Activated CD4-positive, alpha-beta memory T cell treated with anti-CD3 and anti-CD28 coated beads, Interleukin-2, amount 10 ng/mL, durations not matched to agents 7 days and 5 days (primary cell): ENCODE measurements at regions of chr11 and their contacts with region 1.

Region 1: GRCh38 chr11:269146-269890 is 8.9 kb upstream of the NLRP6 start:
- DNase-seq: peak; percentile 67
- H3K4me3 Mint-ChIP-seq: peak overlapping the region; percentile 88
- H3K27ac Mint-ChIP-seq: peak overlapping the region; percentile 98
- H3K4me1 Mint-ChIP-seq: peaks cover 36% of the 10 kb centered on the region
- H3K27me3 Mint-ChIP-seq: peaks cover 13% of the 10 kb centered on the region

Region 2: DNA sequence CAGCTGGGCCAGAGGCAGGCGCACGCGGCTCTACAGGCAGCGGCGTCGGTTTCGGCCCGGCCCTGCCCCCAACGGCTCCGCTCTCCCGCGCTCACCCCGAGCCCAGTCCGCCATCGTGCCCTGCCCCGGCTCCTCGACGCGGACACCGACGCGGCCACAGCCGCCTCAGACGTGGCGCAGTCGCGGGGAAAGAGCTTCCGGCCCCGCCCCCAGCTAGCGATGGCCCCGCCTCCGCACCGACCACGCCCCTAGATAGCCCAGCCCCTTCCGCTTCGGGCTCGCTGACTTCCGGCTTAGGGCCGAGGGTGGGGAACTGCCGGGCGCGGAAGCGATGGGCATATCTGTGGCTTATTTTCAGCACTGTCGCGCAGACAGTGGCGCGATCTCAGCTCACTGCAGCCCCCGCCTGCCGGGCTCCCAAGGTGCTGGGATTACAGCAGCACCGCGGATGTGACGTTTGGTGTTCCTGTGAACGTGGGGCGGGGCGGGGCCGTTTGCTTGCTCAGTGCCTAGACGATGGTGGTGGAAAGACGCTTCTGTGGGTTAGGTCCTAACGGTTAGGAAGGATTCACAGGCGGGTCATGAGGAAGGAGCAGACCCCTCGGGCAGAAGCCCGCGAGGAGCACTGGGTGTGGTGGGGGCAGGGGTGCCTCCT is 62.0 kb before region 1 on chr11 and contains the starts of genes BET1L and RIC8A:
- CTCF ChIA-PET with region 1: no interaction called
- POLR2A ChIA-PET with region 1: interaction called, 30 read pairs
- DNase-seq: peak; percentile 98
- H3K4me3 Mint-ChIP-seq: peak within 1 kb of the TSS; percentile 96
- H3K27ac Mint-ChIP-seq: peak within 1 kb of the TSS; percentile 100
- H3K4me1 Mint-ChIP-seq: peaks cover 55% of the 10 kb centered on the region
- H3K27me3 Mint-ChIP-seq: no peaks in the 10 kb centered on the region
- total RNA-seq, gene BET1L: 39.3 to 44.5 TPM
- total RNA-seq, gene RIC8A: 98.7 to 103 TPM

Region 3: DNA sequence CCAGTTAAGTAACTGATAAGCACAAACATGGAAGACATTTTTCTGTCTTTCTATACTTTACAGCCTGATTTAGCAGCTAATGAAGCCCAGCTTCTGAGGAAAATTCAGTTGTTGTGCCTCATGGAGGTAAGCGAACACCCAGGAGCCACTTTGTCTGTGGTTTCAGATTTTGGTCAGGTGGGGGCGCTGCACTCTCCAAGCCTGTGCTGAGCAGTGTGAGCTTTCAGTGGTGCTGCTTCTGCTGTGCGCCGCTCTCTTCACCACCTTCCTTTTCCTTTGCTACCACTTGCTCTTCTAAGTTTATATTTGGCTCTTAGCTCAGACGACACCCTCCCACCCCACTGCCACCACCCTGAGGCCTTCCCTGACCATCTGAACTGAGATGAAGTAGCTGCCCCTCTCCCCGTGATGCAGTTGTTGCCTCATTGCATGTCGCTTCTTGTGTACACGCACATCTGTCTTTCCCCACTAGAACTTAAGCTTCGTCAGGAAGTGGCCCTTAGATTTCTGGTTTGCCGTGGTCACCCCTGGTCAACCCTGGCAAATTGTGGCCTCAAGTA is 18.5 kb before region 1 on chr11:
- CTCF ChIA-PET with region 1: interaction called, 17 read pairs
- POLR2A ChIA-PET with region 1: interaction called, 25 read pairs
- DNase-seq: peak; percentile 84
- H3K4me3 Mint-ChIP-seq: no peak overlapping the region
- H3K27ac Mint-ChIP-seq: peak overlapping the region; percentile 59
- H3K4me1 Mint-ChIP-seq: peaks cover 11% of the 10 kb centered on the region
- H3K27me3 Mint-ChIP-seq: no peaks in the 10 kb centered on the region

Region 4: GRCh38 chr11:288328-289144 is 19.2 kb after region 1 on chr11 and contains the start of gene PGGHG:
- CTCF ChIA-PET with region 1: interaction called, 3 read pairs
- POLR2A ChIA-PET with region 1: interaction called, 75 read pairs
- DNase-seq: peak; percentile 71
- H3K4me3 Mint-ChIP-seq: peak within 1 kb of the TSS; percentile 95
- H3K27ac Mint-ChIP-seq: peak within 1 kb of the TSS; percentile 80
- H3K4me1 Mint-ChIP-seq: peaks cover 35% of the 10 kb centered on the region
- H3K27me3 Mint-ChIP-seq: peaks cover 10% of the 10 kb centered on the region
- total RNA-seq, gene PGGHG: 113 to 117 TPM

Region 5: GRCh38 chr11:313787-314547 is 44.6 kb after region 1 on chr11 and contains the start of gene IFITM1:
- CTCF ChIA-PET with region 1: no interaction called
- POLR2A ChIA-PET with region 1: interaction called, 37 read pairs
- DNase-seq: peak; percentile 84
- H3K4me3 Mint-ChIP-seq: peak within 1 kb of the TSS; percentile 88
- H3K27ac Mint-ChIP-seq: peak within 1 kb of the TSS; percentile 96
- H3K4me1 Mint-ChIP-seq: peaks cover 33% of the 10 kb centered on the region
- H3K27me3 Mint-ChIP-seq: no peaks in the 10 kb centered on the region
- total RNA-seq, gene IFITM1: 1,010 to 1,055 TPM

Region 6: DNA sequence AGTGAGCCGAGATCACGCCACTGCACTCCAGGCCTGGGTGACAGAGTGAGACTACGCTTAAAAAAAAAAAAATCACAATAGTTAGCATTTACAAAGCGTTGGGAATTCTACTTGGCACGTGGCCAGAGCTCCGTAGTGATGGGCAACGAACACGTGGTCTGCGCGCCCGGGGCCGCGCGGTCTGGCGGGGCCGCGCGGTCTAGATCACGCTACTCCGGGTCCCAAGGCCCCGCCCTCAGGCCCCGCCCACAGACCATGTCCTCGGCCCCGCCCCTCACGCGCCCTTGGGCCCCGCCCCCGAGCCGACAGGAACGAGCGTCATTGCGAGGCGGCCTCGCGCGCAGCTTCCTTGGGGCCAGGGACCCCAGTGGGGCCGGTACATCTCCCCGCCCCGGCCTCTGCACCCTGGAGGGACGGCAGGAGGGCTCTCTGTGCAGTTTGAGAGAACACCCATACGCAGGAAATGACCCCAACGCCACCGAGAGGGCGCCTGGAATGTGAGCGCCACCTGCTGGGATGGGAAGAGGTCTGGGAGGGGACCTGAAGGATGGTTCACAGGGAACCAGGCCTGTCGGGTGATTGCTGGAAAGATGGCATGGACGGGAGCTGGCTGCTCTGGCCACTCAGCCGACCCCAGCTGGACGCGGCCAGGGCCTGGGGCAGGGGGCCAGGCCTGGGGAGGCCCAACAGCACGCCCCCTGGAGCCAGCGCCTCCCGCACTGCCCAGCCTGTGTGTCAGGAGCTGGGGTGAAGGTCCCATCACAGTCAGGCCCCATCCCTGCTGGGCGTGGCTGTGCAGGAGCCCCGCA is 178.8 kb after region 1 on chr11:
- CTCF ChIA-PET with region 1: interaction called, 4 read pairs
- POLR2A ChIA-PET with region 1: interaction called, 12 read pairs
- DNase-seq: peak; percentile 96
- H3K4me3 Mint-ChIP-seq: peak overlapping the region; percentile 90
- H3K27ac Mint-ChIP-seq: peak overlapping the region; percentile 97
- H3K4me1 Mint-ChIP-seq: peaks cover 32% of the 10 kb centered on the region
- H3K27me3 Mint-ChIP-seq: peaks cover 9% of the 10 kb centered on the region